ENCODE measurements at regions of chr10 and their contacts with region 1.

Region 1: DNA sequence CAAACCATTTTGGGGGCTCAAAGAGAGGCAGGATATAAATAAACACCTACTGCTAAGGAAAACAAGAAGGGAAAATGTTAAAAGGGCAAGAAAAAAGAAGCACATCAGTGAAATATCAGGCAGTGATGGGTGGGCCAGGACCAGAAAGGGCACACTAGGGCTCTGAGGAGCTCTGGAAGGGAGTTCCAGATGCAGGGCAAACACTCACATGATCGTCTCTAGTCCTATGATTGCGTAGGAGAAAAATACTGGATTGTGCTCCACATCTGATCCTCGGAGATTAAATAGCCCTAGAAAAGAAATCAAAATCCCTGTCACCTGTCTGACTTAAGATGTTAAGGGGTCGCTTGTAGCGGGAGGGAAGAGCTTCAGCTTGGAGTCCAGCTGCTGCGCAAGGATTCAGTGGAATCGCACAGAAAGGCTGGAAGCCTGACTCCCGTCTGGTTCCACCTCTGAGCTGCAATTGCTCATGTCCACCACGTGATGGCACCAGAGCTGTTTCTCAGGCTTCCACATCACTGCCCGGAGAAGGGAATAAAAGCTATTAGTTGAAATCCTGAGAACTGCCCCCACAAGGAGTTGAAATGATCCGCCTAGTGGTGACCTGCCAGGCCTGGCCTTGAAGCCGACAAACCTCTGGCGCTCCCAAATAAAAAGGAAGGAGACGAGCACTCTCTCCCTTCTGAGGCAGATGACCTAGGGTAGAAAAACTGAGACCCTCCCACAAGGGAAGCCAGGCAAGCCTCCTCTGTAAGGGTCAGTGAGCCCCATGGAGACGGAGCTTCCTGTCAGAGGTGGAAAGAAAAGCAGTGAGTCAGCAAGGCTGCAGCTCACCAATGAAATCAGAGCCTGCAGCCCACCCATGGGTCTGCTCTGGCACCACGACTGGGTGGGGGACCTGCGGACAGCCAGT is 39.2 kb downstream of the XPNPEP1 start:
- DNase-seq: peak; percentile 91
- H3K27ac ChIP-seq: peak overlapping the region; percentile 38
- CTCF ChIP-seq: peak; percentile 95

Region 2: GRCh38 chr10:108597031-108597430 is 1287.1 kb before region 1 on chr10:
- CTCF ChIA-PET with region 1: no interaction called
- POLR2A ChIA-PET with region 1: no interaction called
- DNase-seq: no peak
- H3K27ac ChIP-seq: no peak overlapping the region
- CTCF ChIP-seq: no peak

Region 3: DNA sequence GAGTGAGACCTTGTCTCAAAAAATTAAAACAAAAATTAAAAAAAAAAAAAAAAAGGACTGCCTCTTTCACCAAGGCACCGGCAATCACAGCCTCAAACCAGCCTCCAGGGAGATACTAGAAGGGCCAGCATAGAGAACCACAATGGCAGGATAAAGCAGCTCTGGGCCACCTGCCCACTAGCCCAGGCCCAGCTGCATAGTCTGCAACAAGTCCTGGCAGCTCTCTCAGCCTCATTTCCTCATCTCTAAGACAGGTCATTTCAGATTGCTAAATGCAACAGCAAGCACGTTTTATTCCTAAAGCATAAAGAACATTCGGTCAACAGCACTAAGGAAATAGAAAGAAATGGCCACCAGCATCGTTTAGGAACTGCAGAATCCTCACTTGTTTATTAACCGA is 10.4 kb after region 1 on chr10:
- CTCF ChIA-PET with region 1: interaction called, 12 read pairs
- POLR2A ChIA-PET with region 1: no interaction called
- DNase-seq: peak; percentile 74
- H3K27ac ChIP-seq: peak overlapping the region; percentile 89
- CTCF ChIP-seq: no peak

Region 4: DNA sequence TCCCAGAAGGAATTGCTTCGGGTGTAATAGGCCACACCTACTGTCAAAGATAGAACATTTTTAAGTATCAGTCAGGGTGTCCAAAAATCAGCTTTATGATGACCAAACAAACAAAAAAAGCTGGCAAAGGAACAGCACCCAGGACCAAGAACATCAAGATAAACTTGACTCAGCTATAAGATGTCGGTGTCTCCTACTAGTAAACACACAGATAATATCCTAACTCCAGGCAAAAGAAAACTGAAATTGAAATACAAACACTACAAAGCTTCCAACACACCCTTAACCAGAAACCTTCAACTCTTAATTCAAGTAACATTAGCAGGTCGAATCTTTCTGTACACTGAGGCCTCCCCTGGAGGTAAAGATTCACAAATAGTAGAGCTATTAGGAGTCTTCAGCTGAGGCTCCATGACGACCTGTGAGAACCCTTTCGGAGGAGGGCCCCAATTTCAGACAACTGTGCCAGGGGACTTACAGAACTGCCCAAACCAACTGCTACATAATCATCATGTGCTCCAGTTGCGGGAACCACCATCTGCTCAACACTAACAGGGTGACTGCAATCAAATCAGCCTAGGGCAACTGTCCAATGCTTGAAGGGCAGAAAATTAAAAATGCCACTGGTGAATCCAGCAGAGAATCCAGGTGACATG is 18.9 kb after region 1 on chr10:
- CTCF ChIA-PET with region 1: interaction called, 10 read pairs
- POLR2A ChIA-PET with region 1: no interaction called
- DNase-seq: no peak
- H3K27ac ChIP-seq: peak overlapping the region; percentile 41
- CTCF ChIP-seq: no peak

Region 5: DNA sequence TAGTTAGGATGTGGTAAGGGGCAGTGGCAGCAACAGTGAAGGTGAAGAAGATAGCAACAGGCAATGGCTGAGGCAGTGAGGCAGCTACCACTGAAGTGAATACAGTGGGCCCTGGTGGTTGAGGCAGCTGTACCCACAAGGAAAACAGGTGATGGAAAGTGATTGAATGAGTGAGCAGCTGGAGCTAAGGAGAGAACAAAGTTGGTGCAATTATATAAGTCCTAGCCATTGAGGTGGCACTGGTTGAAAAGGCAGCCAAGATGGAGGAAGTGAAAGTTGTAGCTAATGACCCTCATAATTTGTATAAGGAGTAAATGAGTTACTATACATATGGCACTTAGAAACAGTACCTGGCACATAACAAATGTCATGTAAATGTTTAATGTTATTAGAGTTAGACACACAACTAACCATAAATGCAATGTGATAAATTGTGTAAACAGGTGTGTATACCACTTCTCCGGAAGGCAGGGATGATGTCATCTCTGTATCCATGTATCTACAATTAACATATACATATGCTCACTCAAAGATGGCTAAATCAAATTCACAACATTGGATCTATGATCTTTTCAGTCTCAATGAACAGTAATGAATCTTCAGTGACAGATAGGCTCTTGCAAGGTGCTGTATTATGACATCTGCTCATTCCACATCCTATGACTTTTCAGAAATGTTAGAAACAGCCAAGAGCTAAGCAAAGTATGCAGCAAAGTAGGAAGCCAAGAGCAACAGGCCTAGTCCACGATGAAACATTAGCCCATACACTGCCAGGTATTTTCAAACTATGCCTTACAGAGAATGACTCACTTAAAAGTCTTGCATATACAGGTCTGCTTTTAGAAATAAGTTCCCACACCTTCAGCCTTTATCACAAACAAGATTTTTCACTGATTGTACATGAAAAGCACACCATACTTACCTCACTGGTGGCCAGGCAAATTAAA is 28.5 kb after region 1 on chr10:
- CTCF ChIA-PET with region 1: interaction called, 12 read pairs
- POLR2A ChIA-PET with region 1: no interaction called
- DNase-seq: peak; percentile 89
- H3K27ac ChIP-seq: peak overlapping the region; percentile 58; the same call in 1 of the 2 replicates
- CTCF ChIP-seq: no peak

Region 6: GRCh38 chr10:110016039-110016438 is 131.9 kb after region 1 on chr10:
- CTCF ChIA-PET with region 1: interaction called, 17 read pairs
- POLR2A ChIA-PET with region 1: no interaction called
- DNase-seq: no peak
- H3K27ac ChIP-seq: no peak overlapping the region
- CTCF ChIP-seq: 0 out of 2 replicates have a peak, but pooled peaks have one; percentile 13

Measured in RWPE1 (cell line).